GM13976 (cell line): ENCODE measurements at regions of chr17 and their contacts with region 1.

Region 1: GRCh38 chr17:794876-795275 is 12.7 kb downstream of the MRM3 start:
- DNase-seq: peak; percentile 81
- CTCF ChIP-seq: peak; percentile 49

Region 2: GRCh38 chr17:395179-395578 is 399.7 kb before region 1 on chr17:
- in situ Hi-C with region 1: no loop called
- DNase-seq: no peak
- CTCF ChIP-seq: no peak

Region 3: DNA sequence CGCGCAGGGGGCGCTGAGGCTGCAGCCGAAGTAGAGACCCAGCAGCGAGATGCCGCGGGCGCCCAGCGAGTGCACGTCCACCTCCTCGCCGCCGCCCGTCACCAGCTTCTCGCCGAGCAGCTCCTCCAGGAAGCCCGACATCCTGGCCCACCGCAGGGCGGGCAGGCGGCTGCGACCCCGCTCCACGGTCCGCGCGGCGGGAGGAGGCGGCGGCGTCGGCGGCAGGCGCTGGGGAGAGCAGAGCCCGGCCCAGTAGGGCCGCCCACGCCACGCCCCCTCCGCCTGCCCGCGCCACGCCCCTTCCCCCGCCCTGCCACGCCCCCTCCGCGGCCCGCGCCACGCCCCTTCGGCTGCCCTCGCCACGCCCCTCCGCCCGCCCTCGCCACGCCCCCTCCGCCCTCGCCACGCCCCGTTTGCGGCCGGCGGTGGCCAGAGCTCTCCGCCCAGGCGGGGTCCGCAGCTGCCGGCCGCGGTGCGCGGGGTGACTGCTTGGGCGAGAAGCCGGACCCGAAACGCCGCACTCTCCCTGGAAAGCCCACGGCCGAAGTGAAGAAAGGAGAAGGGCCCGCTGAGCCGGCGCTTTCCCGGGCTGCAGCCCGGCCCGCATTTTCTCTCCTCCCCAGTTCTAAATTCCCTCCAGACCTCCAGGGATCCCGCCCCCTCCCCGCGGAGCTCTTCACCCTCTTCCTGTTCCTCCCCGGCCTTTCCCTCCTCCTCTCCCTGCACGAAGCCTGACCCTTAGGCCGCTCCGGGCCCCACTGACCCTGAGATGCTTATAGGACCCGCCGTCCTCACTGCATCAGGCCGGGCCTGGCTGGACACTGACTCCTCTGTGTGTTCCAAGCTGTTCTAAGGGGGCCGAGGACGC is 184.9 kb after region 1 on chr17 and contains the start of gene NXN:
- in situ Hi-C with region 1: loop called (anchors 10 kb)
- DNase-seq: peak; percentile 98
- CTCF ChIP-seq: peak; percentile 17